Activated naive CD4-positive, alpha-beta T cell treated with anti-CD3 and anti-CD28 coated beads for 36 hours (primary cell): ENCODE measurements at regions of chr19 and their contacts with region 1.

Region 1: GRCh38 chr19:9205501-9206113 is 13.8 kb downstream of the OR7D4 start:
- DNase-seq: peak; percentile 76
- H3K4me3 Mint-ChIP-seq: peak overlapping the region; percentile 25
- H3K27ac Mint-ChIP-seq: no peak overlapping the region
- H3K4me1 Mint-ChIP-seq: peaks cover 2% of the 10 kb centered on the region
- H3K27me3 Mint-ChIP-seq: peaks cover 2% of the 10 kb centered on the region

Region 2: GRCh38 chr19:9219489-9219888 is 13.9 kb after region 1 on chr19 and contains the start of gene OR7D4:
- CTCF ChIA-PET with region 1: no interaction called
- intact Hi-C with region 1: no loop called
- DNase-seq: no peak
- H3K4me3 Mint-ChIP-seq: no peak within 1 kb of the TSS
- H3K27ac Mint-ChIP-seq: no peak within 1 kb of the TSS
- H3K4me1 Mint-ChIP-seq: no peaks in the 10 kb centered on the region
- H3K27me3 Mint-ChIP-seq: peaks cover 5% of the 10 kb centered on the region
- total RNA-seq, gene OR7D4: not detected

Region 3: DNA sequence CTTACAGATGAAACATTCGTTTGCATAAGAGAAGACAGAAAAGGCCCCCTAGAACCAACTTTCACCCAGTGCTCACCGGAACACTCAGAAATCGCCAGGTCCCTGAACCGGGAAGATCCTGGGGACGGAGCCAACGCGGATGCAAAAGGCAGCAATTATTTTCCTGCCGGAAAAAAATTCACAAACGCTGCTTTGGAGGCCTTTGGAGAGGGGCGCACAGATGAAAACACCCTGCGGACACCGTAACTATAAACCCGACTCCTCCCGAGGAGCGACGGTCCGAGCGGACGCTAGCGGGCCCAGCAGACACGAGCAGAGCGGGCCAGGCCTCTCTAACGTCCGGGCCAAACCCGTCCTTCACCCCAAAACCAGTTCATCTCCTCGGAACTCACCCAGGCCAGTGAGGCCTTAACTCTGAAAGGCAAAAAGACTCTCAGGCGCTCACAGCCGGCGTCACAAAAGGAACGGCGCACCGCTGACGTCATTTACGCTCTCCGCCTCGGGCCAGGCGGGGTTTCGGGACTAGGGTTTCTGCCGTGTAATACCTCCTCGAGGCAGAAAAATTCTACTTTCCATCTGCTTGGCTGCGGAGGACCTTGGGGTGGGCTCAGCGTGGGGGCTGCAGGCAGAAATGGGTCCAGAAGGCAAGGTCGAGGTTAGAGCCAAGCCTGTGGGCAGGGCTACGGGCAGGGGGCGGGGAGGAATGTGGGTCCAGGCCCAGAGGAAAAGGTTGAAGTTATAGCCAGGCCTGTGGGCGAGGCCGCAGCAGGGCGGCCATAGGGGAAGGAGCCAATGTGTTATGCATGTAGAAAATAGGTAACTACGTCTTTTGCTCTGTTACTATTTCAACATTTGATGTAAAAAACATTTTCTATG is 332.8 kb after region 1 on chr19 and contains the start of gene ZNF426:
- CTCF ChIA-PET with region 1: interaction called, 3 read pairs
- intact Hi-C with region 1: loop called (anchors 2 kb)
- DNase-seq: peak; percentile 95
- H3K4me3 Mint-ChIP-seq: peak within 1 kb of the TSS; percentile 98
- H3K27ac Mint-ChIP-seq: peak within 1 kb of the TSS; percentile 96
- H3K4me1 Mint-ChIP-seq: peaks cover 22% of the 10 kb centered on the region
- H3K27me3 Mint-ChIP-seq: no peaks in the 10 kb centered on the region
- total RNA-seq, gene ZNF426: 11.2 to 12.3 TPM

Region 4: DNA sequence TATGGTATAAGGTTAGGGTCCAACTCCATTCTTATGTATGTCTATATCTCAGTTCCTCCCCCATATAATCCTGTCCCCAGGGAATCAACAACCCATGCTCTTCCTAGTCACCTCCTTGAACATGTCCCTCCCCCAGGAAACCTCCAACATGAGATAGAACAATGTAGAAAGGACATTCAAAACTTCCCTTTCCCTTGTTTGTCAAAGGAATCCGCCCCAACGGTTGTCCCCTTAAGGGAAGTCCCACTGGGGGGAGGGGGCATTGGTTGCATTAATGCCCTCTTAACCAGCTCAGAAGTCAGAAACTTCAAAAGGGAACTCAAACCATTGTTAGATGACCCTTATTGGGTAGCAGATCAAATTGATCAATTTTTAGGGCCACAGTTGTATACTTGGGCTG is 422.2 kb after region 1 on chr19:
- CTCF ChIA-PET with region 1: no interaction called
- intact Hi-C with region 1: loop called (anchors 5 kb)
- DNase-seq: no peak
- H3K4me3 Mint-ChIP-seq: no peak overlapping the region
- H3K27ac Mint-ChIP-seq: no peak overlapping the region
- H3K4me1 Mint-ChIP-seq: no peaks in the 10 kb centered on the region
- H3K27me3 Mint-ChIP-seq: no peaks in the 10 kb centered on the region